ENCODE measurements at regions of chr16 and their contacts with region 1.

Region 1: DNA sequence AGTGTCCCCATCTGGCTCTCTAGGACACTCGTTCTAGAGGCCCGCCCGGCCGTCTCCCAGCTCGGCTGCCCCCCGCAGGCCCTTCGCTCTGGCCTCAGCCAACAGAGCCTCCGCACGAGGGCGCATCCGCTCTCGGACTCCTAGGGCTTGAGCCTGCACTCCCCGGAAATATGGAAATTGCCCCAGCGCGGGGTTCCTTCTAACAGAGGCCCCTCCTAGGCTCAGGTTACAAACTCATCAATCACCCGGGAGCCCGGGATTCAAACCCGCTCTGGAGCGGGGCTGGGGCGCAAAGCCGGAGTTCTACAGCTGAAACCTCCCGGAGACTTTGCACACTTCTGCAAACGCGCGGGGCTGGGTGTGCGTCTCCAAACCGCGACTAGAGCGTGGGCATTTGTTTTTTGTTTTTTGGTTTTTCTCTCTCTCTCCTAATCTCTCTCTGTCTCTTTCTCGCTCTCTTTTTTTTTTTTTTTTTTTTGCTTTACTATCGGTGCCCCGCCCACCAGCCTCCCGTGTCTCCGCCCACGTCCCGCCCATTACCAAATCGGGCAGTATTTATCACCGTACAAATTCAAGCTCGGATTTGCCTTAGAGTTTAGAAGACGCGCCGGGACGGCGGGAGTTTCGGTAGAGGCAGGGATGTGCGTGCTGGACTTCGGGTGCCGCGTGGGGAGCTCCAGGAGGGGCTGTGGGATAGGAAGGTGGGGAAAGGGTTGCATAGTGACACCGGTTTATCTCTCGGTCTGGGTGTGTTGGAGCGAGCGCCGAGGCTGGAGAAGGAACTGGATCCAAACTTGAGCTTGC is 2.4 kb upstream of the FOXL1 start:
- DNase-seq: peak; percentile 50
- H3K4me3 Mint-ChIP-seq: peak overlapping the region; percentile 76
- H3K27ac Mint-ChIP-seq: no peak overlapping the region
- H3K4me1 Mint-ChIP-seq: peaks cover 10% of the 10 kb centered on the region
- H3K27me3 Mint-ChIP-seq: peaks cover 63% of the 10 kb centered on the region

Region 2: DNA sequence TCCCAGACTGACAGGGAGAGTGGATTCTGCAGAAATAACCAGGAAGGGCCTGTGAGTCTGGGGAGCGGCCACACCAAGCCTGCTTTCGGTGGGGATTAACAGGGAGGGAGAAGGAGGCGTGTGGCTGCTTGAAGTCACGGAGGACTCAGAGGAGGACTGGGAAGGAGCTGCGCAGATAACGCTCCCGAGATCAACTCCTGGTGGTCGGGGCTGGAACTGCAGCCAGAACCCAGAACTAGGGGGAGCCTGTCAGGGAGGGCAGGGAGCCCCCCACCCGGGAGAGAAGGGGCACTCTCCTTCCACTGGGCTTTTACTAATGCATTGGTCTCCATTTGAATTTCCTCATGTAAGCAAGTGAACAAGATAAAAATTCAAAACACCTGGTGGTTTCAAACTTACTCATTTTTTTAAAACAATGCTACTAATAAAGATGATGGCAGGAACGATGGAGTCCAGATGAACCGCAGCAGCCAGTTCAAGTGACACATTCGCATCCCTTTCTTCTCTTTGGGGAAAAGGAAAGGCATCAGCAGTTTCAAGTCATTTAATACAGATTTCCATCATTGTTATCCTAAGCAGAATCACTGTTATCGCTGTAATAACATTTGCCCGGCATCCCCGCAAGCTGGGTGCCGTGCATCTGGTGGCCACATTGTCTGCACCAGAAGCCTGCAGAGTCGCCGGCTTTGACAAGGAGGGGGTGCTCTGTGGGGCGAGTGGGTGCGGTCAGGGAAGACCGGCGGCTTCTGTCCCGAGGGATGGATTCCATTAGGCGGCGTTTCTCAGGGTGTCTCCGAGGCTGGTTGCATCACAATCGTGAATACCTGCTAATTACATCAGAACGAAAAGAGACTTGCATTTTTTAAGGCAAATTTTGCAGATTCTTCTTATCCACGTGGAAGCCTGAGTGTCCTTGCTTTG is 185.4 kb after region 1 on chr16:
- intact Hi-C with region 1: loop called (anchors 5 kb)
- DNase-seq: peak; percentile 11
- H3K4me3 Mint-ChIP-seq: no peak overlapping the region
- H3K27ac Mint-ChIP-seq: no peak overlapping the region
- H3K4me1 Mint-ChIP-seq: peaks cover 4% of the 10 kb centered on the region
- H3K27me3 Mint-ChIP-seq: peaks cover 34% of the 10 kb centered on the region

Region 3: GRCh38 chr16:86874141-86874540 is 298.2 kb after region 1 on chr16:
- intact Hi-C with region 1: loop called (anchors 5 kb)
- DNase-seq: peak; percentile 15
- H3K4me3 Mint-ChIP-seq: no peak overlapping the region
- H3K27ac Mint-ChIP-seq: no peak overlapping the region
- H3K4me1 Mint-ChIP-seq: no peaks in the 10 kb centered on the region
- H3K27me3 Mint-ChIP-seq: peaks cover 26% of the 10 kb centered on the region

Measured in activated T-helper 2 cell treated with anti-CD3 and anti-CD28 coated beads, Interferon-gamma antibody, Interleukin-2, Interleukin-4, amounts not matched to agents 10 μg/mL and 5 μg/mL and 100 μg/mL, durations not matched to agents 14 hours and 24 hours and 36 hours (primary cell).